OCI-LY7 (cell line): ENCODE measurements at regions of chr19 and their contacts with region 1.

Region 1: GRCh38 chr19:12139885-12140547 is at the start of gene ZNF20:
- DNase-seq: peak; percentile 96
- H3K4me3 ChIP-seq: peak within 1 kb of the TSS; percentile 89
- H3K27ac ChIP-seq: peak within 1 kb of the TSS; percentile 39
- H3K4me1 ChIP-seq: peaks cover 26% of the 10 kb centered on the region
- CTCF ChIP-seq: no peak
- total RNA-seq, gene ZNF20: 6.1 and 8.9 TPM in 2 replicates

Region 2: DNA sequence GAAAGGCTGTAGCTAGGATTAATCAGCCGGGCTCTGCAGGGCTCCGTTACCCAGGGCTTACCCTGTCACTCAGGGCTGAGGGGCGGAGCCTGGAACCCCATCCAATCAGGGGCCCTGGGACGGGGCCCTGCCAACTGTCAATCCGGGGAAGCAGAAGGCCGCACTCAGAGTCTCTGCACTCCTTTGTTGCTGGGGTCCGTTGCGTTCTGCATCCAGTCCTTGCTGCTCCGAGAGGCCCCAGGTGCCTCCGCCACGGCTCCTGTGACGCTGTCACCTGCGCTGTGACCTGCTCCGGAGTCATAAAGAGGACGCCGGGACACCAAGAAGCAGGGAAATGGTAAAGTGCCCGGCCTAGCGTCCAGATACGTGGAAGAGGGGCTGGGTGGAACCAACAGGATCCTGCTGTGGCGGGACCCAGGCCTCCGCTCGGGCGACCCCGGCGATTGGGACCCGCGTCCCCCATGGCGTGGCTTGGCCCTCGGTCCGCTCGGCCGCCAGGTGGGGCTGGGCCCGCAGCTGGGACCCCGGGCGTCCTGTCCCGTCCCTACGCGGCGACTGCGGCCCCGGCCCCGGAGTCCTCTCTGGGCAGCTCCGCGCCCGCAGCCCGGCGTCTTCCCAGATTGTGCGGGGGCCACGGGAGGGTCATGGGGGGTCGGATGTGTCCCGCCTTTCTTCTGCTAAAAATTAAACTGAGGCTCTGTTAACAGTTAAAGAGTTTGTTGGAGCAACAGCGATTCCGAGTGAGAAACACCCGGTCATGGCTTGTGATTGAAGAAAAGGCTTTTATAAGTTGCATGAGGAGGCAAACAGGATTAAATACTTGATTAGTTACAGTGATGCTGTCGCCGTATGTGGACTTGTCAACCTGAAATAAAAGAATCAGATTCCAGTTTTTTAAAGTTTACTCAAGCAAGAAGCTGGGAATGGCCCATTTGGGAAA is 341.4 kb before region 1 on chr19 and contains the start of gene ZNF491:
- CTCF ChIA-PET with region 1: interaction called, 8 read pairs
- POLR2A ChIA-PET with region 1: no interaction called
- intact Hi-C with region 1: loop called (anchors 2 kb)
- DNase-seq: peak; percentile 94
- H3K4me3 ChIP-seq: peak within 1 kb of the TSS; percentile 75
- H3K27ac ChIP-seq: peak within 1 kb of the TSS; percentile 34
- H3K4me1 ChIP-seq: peaks cover 32% of the 10 kb centered on the region
- CTCF ChIP-seq: peak; percentile 61
- total RNA-seq, gene ZNF491: 1.2 and 2.0 TPM in 2 replicates

Region 3: DNA sequence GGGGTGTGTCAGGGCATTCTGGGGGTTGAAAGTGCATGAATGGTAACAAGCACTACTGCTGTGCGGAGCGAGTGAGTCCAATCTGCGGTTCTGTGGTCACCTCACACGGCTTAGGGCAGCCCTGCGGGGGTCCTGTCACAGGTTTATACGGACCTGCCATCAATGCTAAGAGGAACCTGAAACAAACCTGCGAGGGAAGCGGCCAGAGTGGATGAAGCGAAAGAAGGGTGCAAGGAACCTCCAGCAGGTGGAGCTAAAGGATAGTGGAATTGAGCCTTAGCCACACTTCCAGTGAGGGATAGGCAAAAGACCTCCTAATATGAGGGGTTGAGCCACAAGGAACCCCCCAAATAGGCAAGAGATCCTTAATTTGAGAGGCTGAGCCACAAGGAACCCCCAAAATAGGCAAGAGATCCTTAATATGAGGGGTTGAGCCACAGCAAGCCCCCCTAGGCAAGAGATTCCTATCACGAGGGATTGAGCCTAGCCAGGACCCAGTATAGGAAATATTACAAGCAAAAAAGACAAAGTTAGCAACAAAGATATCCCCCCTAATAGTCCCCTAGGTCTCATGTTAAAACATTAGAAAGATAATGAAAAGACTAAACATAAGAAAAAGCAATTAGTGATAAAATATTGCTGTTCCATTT is 258.7 kb before region 1 on chr19:
- CTCF ChIA-PET with region 1: no interaction called
- POLR2A ChIA-PET with region 1: no interaction called
- intact Hi-C with region 1: loop called (anchors 2 kb)
- DNase-seq: peak; percentile 72
- H3K4me3 ChIP-seq: no peak overlapping the region
- H3K27ac ChIP-seq: no peak overlapping the region
- H3K4me1 ChIP-seq: no peaks in the 10 kb centered on the region
- CTCF ChIP-seq: peak; percentile 83

Region 4: GRCh38 chr19:11924886-11925650 is 214.9 kb before region 1 on chr19 and contains the start of gene ZNF700:
- CTCF ChIA-PET with region 1: interaction called, 5 read pairs
- POLR2A ChIA-PET with region 1: interaction called, 9 read pairs
- intact Hi-C with region 1: loop called (anchors 1 kb)
- DNase-seq: peak; percentile 97
- H3K4me3 ChIP-seq: peak within 1 kb of the TSS; percentile 86
- H3K27ac ChIP-seq: peak within 1 kb of the TSS; percentile 94
- H3K4me1 ChIP-seq: peaks cover 17% of the 10 kb centered on the region
- CTCF ChIP-seq: no peak
- total RNA-seq, gene ZNF700: 18.2 and 20.4 TPM in 2 replicates

Region 5: DNA sequence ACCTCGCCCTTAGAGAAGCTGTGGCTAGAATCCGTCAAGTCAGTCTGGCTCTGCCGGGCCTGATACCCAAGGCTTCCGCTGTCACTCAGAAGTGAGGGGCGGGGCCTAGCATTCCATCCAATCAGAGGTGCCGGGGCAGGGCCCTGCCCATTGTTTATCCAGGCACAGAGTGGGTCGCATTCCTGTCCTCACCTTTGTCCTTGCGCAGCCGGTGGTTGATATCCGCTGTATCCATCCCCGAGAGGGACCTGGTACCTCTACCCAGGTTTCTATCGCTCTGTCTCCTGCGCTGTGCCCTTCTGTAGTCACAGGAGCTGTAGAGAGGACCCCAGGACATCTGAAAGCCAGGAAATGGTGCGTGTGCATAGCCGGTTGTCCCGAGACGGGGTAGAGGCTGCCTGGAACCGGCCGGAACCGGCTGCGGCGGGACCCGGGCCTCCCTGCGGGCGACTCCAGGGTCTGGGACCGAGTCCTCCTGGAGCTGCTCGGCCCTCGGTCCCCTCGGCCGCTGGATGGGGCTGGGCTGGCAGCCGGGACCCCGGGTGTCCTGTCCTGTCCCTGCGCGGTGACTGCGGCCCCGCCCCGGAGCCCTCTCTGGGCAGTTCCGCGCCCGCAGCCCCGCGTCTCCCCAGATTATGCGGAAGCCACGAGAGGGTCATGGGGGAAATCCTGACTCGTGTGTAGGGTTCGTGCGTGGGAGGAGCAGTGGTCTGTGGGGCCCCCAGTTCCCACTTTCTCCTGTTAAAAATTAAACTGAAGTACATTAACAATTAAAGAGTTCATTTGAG is 175.0 kb before region 1 on chr19 and contains the start of gene ZNF763:
- CTCF ChIA-PET with region 1: interaction called, 3 read pairs
- POLR2A ChIA-PET with region 1: interaction called, 3 read pairs
- intact Hi-C with region 1: loop called (anchors 1 kb)
- DNase-seq: peak; percentile 95
- H3K4me3 ChIP-seq: peak within 1 kb of the TSS; percentile 85
- H3K27ac ChIP-seq: peak within 1 kb of the TSS; percentile 63
- H3K4me1 ChIP-seq: peaks cover 15% of the 10 kb centered on the region
- CTCF ChIP-seq: no peak
- total RNA-seq, gene ZNF763: 2.7 and 2.8 TPM in 2 replicates

Region 6: GRCh38 chr19:11987405-11988281 is 152.4 kb before region 1 on chr19:
- CTCF ChIA-PET with region 1: no interaction called
- POLR2A ChIA-PET with region 1: no interaction called
- intact Hi-C with region 1: loop called (anchors 2 kb)
- DNase-seq: peak; percentile 96
- H3K4me3 ChIP-seq: peak overlapping the region; percentile 96
- H3K27ac ChIP-seq: peak overlapping the region; percentile 88
- H3K4me1 ChIP-seq: peaks cover 48% of the 10 kb centered on the region
- CTCF ChIP-seq: no peak

Region 7: GRCh38 chr19:12194827-12195731 is 55.1 kb after region 1 on chr19:
- CTCF ChIA-PET with region 1: no interaction called
- POLR2A ChIA-PET with region 1: no interaction called
- intact Hi-C with region 1: no loop called
- DNase-seq: no peak
- H3K4me3 ChIP-seq: no peak overlapping the region
- H3K27ac ChIP-seq: no peak overlapping the region
- H3K4me1 ChIP-seq: no peaks in the 10 kb centered on the region
- CTCF ChIP-seq: no peak

Region 8: DNA sequence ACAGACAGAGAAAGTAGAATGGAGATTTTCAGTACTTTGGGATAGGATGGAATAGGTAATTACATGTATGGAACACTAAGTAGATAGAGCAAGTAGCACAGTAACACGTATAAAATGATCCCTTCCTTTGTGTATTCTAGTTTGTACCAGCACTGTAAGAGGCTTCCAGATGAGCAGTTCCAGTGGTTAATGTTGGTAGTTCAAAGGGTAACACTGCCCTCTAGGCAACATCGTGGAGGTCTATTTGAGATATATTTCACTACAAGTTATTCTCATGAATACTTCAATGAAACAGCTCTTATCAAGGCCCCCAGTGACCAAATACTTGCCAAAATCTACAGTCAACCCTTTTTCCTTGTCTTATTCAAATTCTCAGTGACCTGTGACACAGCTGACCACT is 206.9 kb after region 1 on chr19:
- CTCF ChIA-PET with region 1: no interaction called
- POLR2A ChIA-PET with region 1: no interaction called
- intact Hi-C with region 1: loop called (anchors 1 kb)
- DNase-seq: peak; percentile 60
- H3K4me3 ChIP-seq: no peak overlapping the region
- H3K27ac ChIP-seq: no peak overlapping the region
- H3K4me1 ChIP-seq: no peaks in the 10 kb centered on the region
- CTCF ChIP-seq: peak; percentile 71